ENCODE measurements at regions of chr16 and their contacts with region 1.

Region 1: GRCh38 chr16:2777231-2777902 is at the start of gene ELOB:
- DNase-seq: peak; percentile 69 to 97 (median 80)

Region 2: GRCh38 chr16:2752035-2752849 is 25.1 kb before region 1 on chr16 and contains the start of gene SRRM2:
- intact Hi-C with region 1: loop called (anchors 1 kb)
- DNase-seq: peak; percentile 84 to 98 (median 92)

Region 3: DNA sequence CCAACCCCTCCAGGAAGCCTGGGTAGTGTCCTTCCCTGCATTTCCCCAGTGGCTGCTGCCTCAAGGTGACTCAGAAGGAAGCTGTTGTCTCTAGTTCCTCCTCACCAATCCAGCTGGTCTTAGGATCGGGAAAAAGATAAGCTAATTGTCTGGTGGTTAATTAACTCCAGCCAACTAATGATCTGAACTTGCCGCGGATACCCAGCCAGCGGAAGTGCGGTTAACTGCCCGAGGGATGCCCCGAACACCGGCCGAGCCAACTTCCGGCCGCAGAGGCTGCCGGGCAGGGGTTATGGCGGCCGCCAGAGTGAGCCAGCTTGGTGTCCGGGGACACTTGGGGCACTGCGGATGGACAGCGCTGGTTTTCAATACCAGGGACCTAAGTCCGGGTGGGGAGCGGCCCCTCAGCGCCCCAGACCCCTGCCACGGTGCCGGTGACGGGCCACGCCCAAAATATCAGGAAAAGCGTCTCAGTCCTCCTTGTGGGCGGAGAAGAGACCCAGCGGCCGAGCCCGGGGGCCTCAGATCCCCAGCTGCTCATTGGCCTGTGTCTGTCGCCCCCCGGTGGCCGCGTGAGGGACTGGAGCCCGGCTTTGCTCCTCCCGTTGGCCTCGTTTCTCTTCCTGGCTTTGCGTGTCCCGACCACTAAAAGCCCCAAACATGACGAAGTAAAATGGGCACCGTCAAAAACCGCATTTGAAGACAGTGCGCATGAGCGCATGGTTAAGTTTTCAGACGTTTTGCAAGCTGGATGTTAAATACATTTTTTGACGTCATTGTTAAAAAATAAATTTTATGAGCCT is 90.8 kb after region 1 on chr16:
- intact Hi-C with region 1: loop called (anchors 5 kb)
- DNase-seq: peak; percentile 88 to 99 (median 94)

Region 4: DNA sequence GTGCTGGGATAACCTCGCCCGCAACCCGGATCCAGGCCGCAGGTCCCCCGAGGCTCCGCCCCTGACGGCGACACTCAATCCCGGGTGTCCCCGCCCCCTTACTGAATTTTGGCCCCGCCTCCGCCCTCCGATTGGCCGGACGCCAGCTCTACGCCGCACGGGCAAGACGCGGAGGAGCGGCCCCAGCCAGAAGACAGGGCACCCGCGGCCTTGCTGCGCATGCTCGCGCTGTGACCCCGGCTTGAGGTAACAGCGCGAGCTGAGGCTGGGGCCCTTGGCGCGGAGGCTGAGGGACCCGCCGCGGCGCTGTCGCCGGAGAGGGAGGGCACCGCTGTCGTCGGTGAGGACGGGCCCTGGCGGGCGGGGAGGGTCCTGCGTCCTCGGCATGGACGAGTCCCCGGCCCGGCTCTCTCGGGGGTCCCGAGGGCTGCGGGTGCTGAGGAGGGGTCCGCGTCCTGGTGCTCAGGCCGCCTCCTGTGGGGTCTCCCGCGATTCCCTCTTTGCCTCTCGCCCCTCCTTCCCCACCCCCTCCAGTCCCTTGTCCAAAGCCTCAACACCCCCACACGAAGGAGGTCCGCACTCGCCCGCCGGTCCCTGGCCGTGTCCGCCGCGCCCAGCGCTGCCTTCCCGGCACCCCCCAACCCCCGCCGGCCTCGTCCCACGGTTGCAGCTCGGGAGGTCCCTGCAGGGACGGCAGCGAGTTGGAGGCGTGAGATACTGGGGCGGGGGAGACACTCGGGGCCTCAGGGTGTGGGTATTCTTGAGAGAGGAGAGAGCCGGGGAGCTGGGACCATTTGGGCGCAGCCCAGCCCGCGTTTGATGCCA is 105.9 kb after region 1 on chr16 and contains the start of gene FLYWCH2:
- intact Hi-C with region 1: loop called (anchors 5 kb)
- DNase-seq: peak; percentile 97 to 100 (median 99)